Dorsolateral prefrontal cortex (tissue), 120 donors: ENCODE measurements at regions of chr3 and their contacts with region 1.

Region 1: GRCh38 chr3:178325330-178325729 is 210.9 kb upstream of the KCNMB2 start:
- DNase-seq: no peak
- H3K4me3 ChIP-seq: no peak overlapping the region
- H3K27ac ChIP-seq: peak overlapping the region in 7 of 59 donors; percentile 23 to 46 (median 35)
- H3K27me3 ChIP-seq: no peaks in the 10 kb centered on the region
- CTCF ChIP-seq: peak; percentile 7 to 77 (median 56)

Region 2: DNA sequence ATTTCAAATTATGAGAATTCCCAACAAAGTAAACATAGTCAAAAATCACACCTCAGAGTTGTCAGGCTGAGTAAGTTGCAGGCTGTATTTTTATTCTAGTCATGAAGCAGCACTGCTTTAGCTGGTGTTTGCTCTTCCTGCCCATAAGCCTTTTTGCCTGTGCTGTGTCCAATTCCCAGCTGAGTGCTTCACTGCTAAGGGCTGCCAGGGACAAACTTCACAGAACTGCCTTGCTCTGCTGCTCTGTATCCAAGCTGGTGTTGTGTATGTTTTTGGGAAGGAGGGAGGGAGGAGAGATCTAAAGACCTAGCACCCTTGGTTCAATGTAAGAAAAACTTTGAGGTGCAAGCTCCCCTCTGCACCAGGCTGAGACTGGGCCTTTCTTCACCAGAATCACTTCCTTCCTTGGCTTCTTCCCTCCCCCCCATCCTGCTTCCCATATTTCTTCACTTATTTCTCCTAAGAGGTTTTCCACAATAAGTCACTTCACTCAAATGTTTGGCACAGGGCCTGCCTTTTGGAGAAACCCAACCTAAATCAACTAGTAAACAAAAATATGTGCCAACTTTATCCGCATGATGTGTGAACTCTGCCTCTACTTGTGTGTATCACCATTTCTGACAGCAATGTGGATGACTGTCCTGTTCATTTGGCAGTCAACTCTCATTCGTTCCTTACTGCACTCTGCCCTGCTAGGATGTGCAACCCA is 1284.2 kb before region 1 on chr3:
- intact Hi-C with region 1: loop called in 1 of 2 experiments (anchors 10 kb)
- DNase-seq: peak in 2 of 10 donors; percentile 24 to 30
- H3K4me3 ChIP-seq: no peak overlapping the region
- H3K27ac ChIP-seq: peak overlapping the region in 48 of 59 donors; percentile 4 to 66 (median 42)
- H3K27me3 ChIP-seq: no peaks in the 10 kb centered on the region
- CTCF ChIP-seq: no peak

Region 3: GRCh38 chr3:177050501-177051237 is 1274.7 kb before region 1 on chr3:
- intact Hi-C with region 1: loop called (anchors 10 kb)
- DNase-seq: no peak
- H3K4me3 ChIP-seq: peak overlapping the region in 27 of 59 donors; percentile 6 to 50 (median 28)
- H3K27ac ChIP-seq: peak overlapping the region in 57 of 59 donors; percentile 8 to 91 (median 77)
- H3K27me3 ChIP-seq: no peaks in the 10 kb centered on the region
- CTCF ChIP-seq: peak; percentile 53 to 82 (median 74)

Region 4: GRCh38 chr3:177367788-177368187 is 957.5 kb before region 1 on chr3:
- intact Hi-C with region 1: loop called in 1 of 2 experiments (anchors 5 kb)
- DNase-seq: no peak
- H3K4me3 ChIP-seq: no peak overlapping the region
- H3K27ac ChIP-seq: no peak overlapping the region
- H3K27me3 ChIP-seq: no peaks in the 10 kb centered on the region
- CTCF ChIP-seq: no peak